Colonic mucosa (tissue), 4 donors: ENCODE measurements at regions of chr1 and their contacts with region 1.

Region 1: GRCh38 chr1:226201029-226201593 is 14.6 kb upstream of the ACBD3 start:
- DNase-seq: no peak
- H3K4me3 ChIP-seq: no peak overlapping the region
- H3K27ac ChIP-seq: no peak overlapping the region
- H3K4me1 ChIP-seq: no peaks in the 10 kb centered on the region
- H3K27me3 ChIP-seq: no peaks in the 10 kb centered on the region
- CTCF ChIP-seq: no peak

Region 2: DNA sequence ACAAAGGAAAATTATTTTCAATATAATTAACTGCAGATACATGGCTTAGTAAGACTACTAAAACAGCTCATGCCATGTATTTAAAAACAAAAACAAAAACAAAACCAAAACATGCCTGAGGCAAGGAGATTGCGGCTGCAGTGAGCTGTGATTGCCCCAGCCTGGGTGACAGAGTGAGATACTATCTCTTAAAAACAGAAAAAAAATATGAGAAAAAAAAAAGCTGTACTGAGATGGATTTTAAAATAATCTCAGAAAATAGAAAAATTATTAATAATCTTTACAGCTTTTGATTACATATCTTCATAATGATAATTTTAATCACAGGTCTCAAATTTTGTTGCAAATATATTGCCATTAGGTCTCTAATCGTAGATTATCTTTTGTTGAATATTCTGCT is 131.8 kb after region 1 on chr1:
- intact Hi-C with region 1: loop called (anchors 5 kb)
- DNase-seq: no peak
- H3K4me3 ChIP-seq: no peak overlapping the region
- H3K27ac ChIP-seq: no peak overlapping the region
- H3K4me1 ChIP-seq: no peaks in the 10 kb centered on the region
- H3K27me3 ChIP-seq: no peaks in the 10 kb centered on the region
- CTCF ChIP-seq: no peak